ENCODE measurements at regions of chr15 and their contacts with region 1.

Region 1: GRCh38 chr15:82749951-82750830 is 40.5 kb upstream of the AP3B2 start:
- DNase-seq: peak; percentile 92 to 97
- ATAC-seq: peak; percentile 92 to 95 (median 94)
- H3K4me3 ChIP-seq: peak overlapping the region; percentile 88
- H3K27ac ChIP-seq: peak overlapping the region; percentile 98
- H3K4me1 ChIP-seq: peaks cover 42% of the 10 kb centered on the region
- H3K27me3 ChIP-seq: no peaks in the 10 kb centered on the region
- CTCF ChIP-seq: no peak

Region 2: GRCh38 chr15:82540055-82540983 is 209.9 kb before region 1 on chr15 and contains the start of gene RPS17:
- intact Hi-C with region 1: loop called in 1 of 2 experiments (anchors 1 kb)
- DNase-seq: peak; percentile 97 to 98
- ATAC-seq: peak; percentile 94 to 97 (median 96)
- H3K4me3 ChIP-seq: peak within 1 kb of the TSS; percentile 93
- H3K27ac ChIP-seq: peak within 1 kb of the TSS; percentile 93
- H3K4me1 ChIP-seq: peaks cover 21% of the 10 kb centered on the region
- H3K27me3 ChIP-seq: no peaks in the 10 kb centered on the region
- CTCF ChIP-seq: peak; percentile 100
- total RNA-seq, gene RPS17: 724 to 1,041 (median 906) TPM

Region 3: DNA sequence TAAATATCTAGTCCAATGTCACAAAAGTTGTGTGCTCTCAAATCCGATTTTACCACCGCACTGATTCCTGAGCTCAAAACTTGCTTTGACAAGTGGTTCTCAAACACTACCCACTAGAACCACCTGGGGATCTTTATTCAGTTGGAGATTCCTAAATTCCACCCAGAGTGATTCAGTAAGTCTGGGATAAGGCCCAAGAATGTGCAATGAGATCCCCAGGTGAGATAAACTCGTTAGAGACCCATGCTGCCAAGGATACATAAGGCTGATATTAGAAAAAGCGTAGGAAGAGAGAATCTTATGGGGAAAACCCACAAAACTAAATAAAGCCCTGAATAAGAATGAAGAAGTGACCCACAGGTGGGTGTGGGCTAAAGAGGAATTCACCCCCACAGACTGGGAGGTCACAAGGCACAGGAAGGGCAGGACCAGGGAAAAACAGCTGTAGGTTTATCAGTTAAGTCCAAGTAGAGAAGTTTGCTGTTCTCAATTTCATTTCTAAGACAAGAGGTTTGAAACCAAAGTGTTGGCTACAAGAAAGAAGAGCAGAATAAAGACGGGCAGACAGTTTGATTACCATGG is 198.4 kb before region 1 on chr15:
- intact Hi-C with region 1: loop called in 1 of 2 experiments (anchors 5 kb)
- DNase-seq: no peak
- ATAC-seq: no peak
- H3K4me3 ChIP-seq: no peak overlapping the region
- H3K27ac ChIP-seq: peak overlapping the region; percentile 6
- H3K4me1 ChIP-seq: peaks cover 15% of the 10 kb centered on the region
- H3K27me3 ChIP-seq: no peaks in the 10 kb centered on the region
- CTCF ChIP-seq: no peak

Region 4: GRCh38 chr15:82809404-82810060 is 59.3 kb after region 1 on chr15 and contains the start of gene WHAMM:
- intact Hi-C with region 1: loop called in 1 of 2 experiments (anchors 1 kb)
- DNase-seq: peak; percentile 99
- ATAC-seq: peak; percentile 86 to 91 (median 86)
- H3K4me3 ChIP-seq: peak within 1 kb of the TSS; percentile 92
- H3K27ac ChIP-seq: peak within 1 kb of the TSS; percentile 100
- H3K4me1 ChIP-seq: peaks cover 50% of the 10 kb centered on the region
- H3K27me3 ChIP-seq: no peaks in the 10 kb centered on the region
- CTCF ChIP-seq: no peak
- total RNA-seq, gene WHAMM: 14.7 to 30.8 (median 24.1) TPM

Measured in psoas muscle (tissue), 8 donors.